ENCODE measurements at regions of chr12 and their contacts with region 1.

Region 1: GRCh38 chr12:6285063-6285477 is 25.4 kb upstream of the PLEKHG6 start:
- DNase-seq: no peak
- H3K4me3 ChIP-seq: no peak overlapping the region
- CTCF ChIP-seq: peak in 1 of 3 donors; percentile 94
- POLR2A ChIP-seq: no peak

Region 2: GRCh38 chr12:5988659-5989116 is 296.4 kb before region 1 on chr12:
- intact Hi-C with region 1: loop called (anchors 10 kb)
- DNase-seq: peak; percentile 56 to 93
- H3K4me3 ChIP-seq: no peak overlapping the region
- CTCF ChIP-seq: peak in 1 of 3 donors; percentile 7
- POLR2A ChIP-seq: no peak

Region 3: GRCh38 chr12:6195665-6196535 is 89.2 kb before region 1 on chr12:
- intact Hi-C with region 1: loop called (anchors 2 kb)
- DNase-seq: peak; percentile 90 to 98
- H3K4me3 ChIP-seq: no peak overlapping the region
- CTCF ChIP-seq: peak in 1 of 3 donors; percentile 87
- POLR2A ChIP-seq: no peak